ENCODE measurements at regions of chr9 and their contacts with region 1.

Region 1: GRCh38 chr9:128540634-128541360 is 11.6 kb upstream of the SPTAN1 start:
- DNase-seq: no peak
- ATAC-seq: no peak
- H3K4me3 ChIP-seq: no peak overlapping the region
- H3K27ac ChIP-seq: no peak overlapping the region
- H3K4me1 ChIP-seq: no peaks in the 10 kb centered on the region
- CTCF ChIP-seq: no peak
- EP300 ChIP-seq: no peak
- POLR2A ChIP-seq: no peak
- RAD21 ChIP-seq: no peak

Region 2: DNA sequence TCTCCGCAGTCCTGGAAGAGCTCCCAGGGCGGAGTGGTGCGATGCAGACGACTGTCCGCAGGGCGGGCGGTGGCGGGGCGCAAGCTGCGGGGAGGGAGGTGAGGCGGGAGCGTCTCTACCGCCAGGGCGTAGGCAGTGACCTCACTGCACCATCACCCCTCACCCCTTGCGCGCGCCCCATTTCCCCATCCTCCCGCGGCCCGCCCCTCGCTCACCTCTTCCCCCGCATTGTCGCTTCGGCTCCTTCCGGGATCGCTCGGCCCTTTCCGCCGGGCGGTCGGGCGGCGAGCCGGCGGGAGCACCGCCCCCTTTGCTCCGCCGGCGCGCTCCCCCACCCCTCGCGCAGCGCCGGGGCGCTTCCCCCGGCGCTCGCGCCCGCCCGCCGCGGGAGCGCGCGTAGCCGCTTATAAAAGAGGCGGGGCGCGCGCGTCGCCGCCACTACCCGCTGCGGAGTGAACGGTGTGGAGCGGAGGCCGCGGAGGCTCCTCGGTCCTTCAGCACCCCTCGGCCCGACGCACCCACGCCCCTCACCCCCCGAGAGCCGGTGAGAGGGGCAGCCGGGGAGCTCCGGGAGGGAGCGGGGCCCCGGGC is 11.5 kb after region 1 on chr9 and contains the start of gene SPTAN1:
- CTCF ChIA-PET with region 1: interaction called, 8 read pairs
- POLR2A ChIA-PET with region 1: interaction called, 12 read pairs
- DNase-seq: peak; percentile 87
- ATAC-seq: peak; percentile 76 to 85
- H3K4me3 ChIP-seq: peak within 1 kb of the TSS; percentile 75
- H3K27ac ChIP-seq: peak within 1 kb of the TSS; percentile 88 to 95
- H3K4me1 ChIP-seq: peaks cover 48% of the 10 kb centered on the region
- CTCF ChIP-seq: no peak
- EP300 ChIP-seq: no peak
- POLR2A ChIP-seq: peak; percentile 98
- RAD21 ChIP-seq: no peak
- polyA plus RNA-seq, gene SPTAN1: 122 and 144 TPM in 2 replicates

Region 3: DNA sequence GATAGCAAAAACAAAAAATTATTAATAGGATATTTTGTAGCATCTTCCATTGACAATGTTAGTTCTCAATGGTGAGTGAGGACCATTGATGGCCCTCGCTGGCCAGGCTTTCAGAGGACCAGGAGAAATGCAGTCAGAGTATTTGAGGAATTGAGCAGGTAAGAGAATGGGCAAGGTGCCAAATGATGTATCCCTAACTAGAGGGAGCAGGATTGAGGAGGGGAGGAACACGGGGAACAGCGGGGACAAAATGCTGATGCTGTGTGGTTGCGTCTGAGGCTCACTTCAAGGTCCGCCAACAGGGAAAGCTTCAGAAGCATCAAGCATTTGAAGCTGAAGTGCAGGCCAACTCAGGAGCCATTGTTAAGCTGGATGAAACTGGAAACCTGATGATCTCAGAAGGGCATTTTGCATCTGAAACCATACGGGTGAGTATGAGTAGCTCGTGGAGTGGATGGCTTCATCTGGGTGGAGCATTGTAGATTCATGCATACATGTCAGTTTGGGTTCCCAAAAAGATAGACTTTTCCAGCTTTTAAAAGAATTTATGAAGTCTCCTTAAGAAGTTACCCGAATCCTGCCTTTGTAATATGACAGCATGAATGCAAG is 27.8 kb after region 1 on chr9:
- CTCF ChIA-PET with region 1: no interaction called
- POLR2A ChIA-PET with region 1: no interaction called
- DNase-seq: no peak
- ATAC-seq: no peak
- H3K4me3 ChIP-seq: no peak overlapping the region
- H3K27ac ChIP-seq: no peak overlapping the region
- H3K4me1 ChIP-seq: no peaks in the 10 kb centered on the region
- CTCF ChIP-seq: no peak
- EP300 ChIP-seq: no peak
- POLR2A ChIP-seq: no peak
- RAD21 ChIP-seq: no peak

Region 4: DNA sequence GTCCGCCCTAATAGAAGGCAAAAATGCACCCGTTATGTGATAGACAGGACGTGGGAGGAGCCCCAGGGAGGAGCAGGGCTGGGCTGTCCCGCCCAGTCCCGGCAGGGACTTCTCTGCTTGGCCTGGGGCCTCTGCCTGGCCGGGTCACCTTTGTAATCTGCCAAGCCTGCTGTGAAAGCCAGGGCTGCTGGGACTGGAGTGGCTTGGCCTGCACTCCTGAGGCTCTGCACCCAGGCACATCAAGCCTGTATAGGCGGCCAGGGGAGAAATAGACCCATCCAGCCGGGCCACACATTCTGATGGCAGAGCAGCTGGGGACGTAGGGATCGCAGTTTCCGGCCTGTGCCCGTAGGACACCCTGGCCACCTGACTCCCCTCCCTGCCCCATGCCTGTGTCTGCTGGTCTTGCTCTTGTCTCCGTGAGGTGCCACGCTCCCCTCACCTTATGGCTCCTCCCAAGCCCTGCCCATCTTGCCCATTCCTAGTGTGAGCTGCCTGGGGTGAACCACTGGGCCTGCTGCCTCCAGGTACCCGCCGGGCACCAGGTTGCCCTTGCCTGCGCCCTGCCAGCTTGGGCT is 87.8 kb after region 1 on chr9:
- CTCF ChIA-PET with region 1: no interaction called
- POLR2A ChIA-PET with region 1: no interaction called
- DNase-seq: no peak
- ATAC-seq: peak; percentile 40 to 66
- H3K4me3 ChIP-seq: no peak overlapping the region
- H3K27ac ChIP-seq: peak overlapping the region; percentile 28 to 74; a peak in 3 of 6 replicates
- H3K4me1 ChIP-seq: peaks cover 30% of the 10 kb centered on the region
- CTCF ChIP-seq: no peak
- EP300 ChIP-seq: no peak
- POLR2A ChIP-seq: no peak; the same call in 1 of the 2 replicates
- RAD21 ChIP-seq: no peak